ENCODE measurements at regions of chr3 and their contacts with region 1.

Region 1: DNA sequence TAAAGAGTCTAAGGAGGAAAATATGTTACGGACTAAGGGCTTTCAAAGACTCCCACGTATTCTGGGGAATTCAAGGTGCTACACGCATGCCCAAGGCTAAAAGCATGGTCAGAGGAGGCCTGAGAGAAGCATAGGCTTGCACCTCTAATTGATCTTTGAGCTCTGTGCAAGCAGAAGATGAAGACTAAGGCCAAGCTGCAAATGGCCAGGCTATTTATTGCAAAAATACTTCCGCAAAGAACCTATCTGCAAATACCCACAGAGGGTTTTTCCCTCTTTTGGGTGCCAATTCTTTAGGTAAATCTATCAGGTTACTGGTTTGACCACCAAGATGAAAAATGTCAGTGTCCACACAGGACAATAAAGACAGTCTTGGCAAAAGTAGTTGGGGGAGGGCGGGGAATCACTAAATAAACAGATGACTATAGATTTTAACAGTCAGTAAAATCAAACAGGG is 119.5 kb downstream of the STAG1 start:
- DNase-seq: peak; percentile 80
- ATAC-seq: peak; percentile 82
- H3K4me3 ChIP-seq: no peak overlapping the region; a peak in 1 of 6 replicates
- H3K27ac ChIP-seq: peak overlapping the region; percentile 64
- H3K4me1 ChIP-seq: peaks cover 26% of the 10 kb centered on the region
- H3K27me3 ChIP-seq: no peaks in the 10 kb centered on the region
- CTCF ChIP-seq: no peak
- EP300 ChIP-seq: no peak
- POLR2A ChIP-seq: no peak
- RAD21 ChIP-seq: no peak

Region 2: DNA sequence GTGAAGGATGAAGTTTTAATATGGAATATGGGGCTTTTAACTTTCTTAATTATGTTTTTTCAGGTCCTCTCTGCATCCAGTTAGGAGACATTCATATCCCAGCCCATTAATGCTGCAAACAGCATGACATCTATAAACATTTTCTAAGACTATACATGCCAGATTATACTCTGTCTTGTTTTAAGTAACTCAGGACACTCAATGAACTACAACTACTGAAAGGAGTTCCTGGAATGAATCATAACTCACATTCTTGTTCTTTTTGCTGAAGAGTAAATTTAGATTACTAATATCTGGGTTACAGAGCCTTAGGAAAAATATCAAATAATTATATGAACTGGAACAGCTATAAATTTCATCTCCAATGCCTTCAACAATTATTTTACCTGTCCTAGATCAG is 47.9 kb before region 1 on chr3:
- CTCF ChIA-PET with region 1: no interaction called
- POLR2A ChIA-PET with region 1: no interaction called
- in situ Hi-C with region 1: no loop called
- intact Hi-C with region 1: loop called (anchors 5 kb)
- DNase-seq: no peak
- ATAC-seq: no peak
- H3K4me3 ChIP-seq: no peak overlapping the region
- H3K27ac ChIP-seq: no peak overlapping the region
- H3K4me1 ChIP-seq: peaks cover 25% of the 10 kb centered on the region
- H3K27me3 ChIP-seq: no peaks in the 10 kb centered on the region
- CTCF ChIP-seq: no peak
- EP300 ChIP-seq: no peak
- POLR2A ChIP-seq: no peak
- RAD21 ChIP-seq: no peak

Measured in HepG2 (cell line).